SK-N-SH (cell line): ENCODE measurements at regions of chr17 and their contacts with region 1.

Region 1: DNA sequence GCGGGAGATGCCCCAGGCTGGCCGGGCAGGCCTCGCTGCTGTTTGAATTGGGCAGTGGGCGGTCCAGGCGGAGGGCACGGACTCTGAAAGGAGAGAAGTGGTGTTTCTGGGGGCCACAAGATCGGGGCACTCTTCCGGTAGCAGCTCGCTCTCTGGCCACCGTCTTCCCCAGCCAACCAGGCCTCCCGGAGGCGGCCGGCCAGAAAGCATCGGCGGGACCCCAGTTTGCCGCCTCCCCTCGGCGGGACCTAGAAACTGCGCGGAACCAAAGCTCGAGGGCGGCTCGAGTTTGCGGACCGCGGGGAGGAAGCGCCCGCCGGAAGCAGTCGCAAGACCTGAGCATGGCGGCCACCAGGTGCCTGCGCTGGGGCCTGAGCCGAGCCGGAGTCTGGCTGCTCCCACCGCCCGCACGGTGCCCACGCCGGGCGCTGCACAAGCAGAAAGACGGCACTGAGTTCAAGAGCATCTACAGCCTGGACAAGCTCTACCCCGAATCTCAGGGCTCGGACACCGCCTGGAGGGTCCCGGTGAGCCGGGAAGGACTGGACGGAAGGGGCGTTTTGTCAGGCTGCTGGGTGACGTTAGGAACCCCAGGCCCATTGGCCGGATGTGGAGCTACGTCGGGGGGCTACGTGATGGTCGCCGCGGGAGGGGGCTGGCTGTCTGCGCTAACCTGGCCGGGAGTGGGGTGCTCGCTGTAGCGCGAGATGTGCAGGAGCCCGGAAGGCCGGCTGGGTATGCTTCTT is at the start of gene MRPL58:
- DNase-seq: peak; percentile 96
- H3K4me3 ChIP-seq: peak within 1 kb of the TSS; percentile 65 to 77
- H3K27ac ChIP-seq: peak within 1 kb of the TSS; percentile 88 to 95
- H3K4me1 ChIP-seq: peaks cover 17 to 26% of the 10 kb centered on the region in 2 experiments; a peak in 3 of 4 replicates
- H3K27me3 ChIP-seq: no peaks in the 10 kb centered on the region
- CTCF ChIP-seq: peak; percentile 59
- EP300 ChIP-seq: peak; percentile 11 to 37; a peak in 2 of 4 replicates
- RAD21 ChIP-seq: peak; percentile 50
- polyA plus RNA-seq, gene MRPL58: 87.3 and 89.2 TPM in 2 replicates

Region 2: GRCh38 chr17:74972107-74972972 is 40.2 kb before region 1 on chr17 and contains the start of gene HID1:
- CTCF ChIA-PET with region 1: interaction called, 51 read pairs
- POLR2A ChIA-PET with region 1: interaction called, 97 read pairs
- DNase-seq: peak; percentile 96
- H3K4me3 ChIP-seq: peak within 1 kb of the TSS; percentile 54 to 70
- H3K27ac ChIP-seq: peak within 1 kb of the TSS in 1 of 2 experiments; percentile 85; a peak in 2 of 4 replicates
- H3K4me1 ChIP-seq: peaks cover 0 to 22% of the 10 kb centered on the region in 2 experiments; a peak in 1 of 4 replicates
- H3K27me3 ChIP-seq: peaks cover 26% of the 10 kb centered on the region
- CTCF ChIP-seq: no peak
- EP300 ChIP-seq: no peak
- RAD21 ChIP-seq: no peak
- polyA plus RNA-seq, gene HID1: 2.5 and 2.9 TPM in 2 replicates

Region 3: GRCh38 chr17:74981979-74982662 is 30.4 kb before region 1 on chr17:
- CTCF ChIA-PET with region 1: interaction called, 136 read pairs
- POLR2A ChIA-PET with region 1: interaction called, 197 read pairs
- DNase-seq: peak; percentile 99
- H3K4me3 ChIP-seq: peak overlapping the region; percentile 64 to 94
- H3K27ac ChIP-seq: peak overlapping the region; percentile 59 to 91
- H3K4me1 ChIP-seq: peaks cover 5 to 11% of the 10 kb centered on the region in 2 experiments; a peak in 2 of 4 replicates
- H3K27me3 ChIP-seq: no peaks in the 10 kb centered on the region
- CTCF ChIP-seq: peak; percentile 12; the same call in 1 of the 2 replicates
- EP300 ChIP-seq: 0 out of 4 replicates have a peak, but pooled peaks of 1 of the 2 experiments have one; percentile 4
- RAD21 ChIP-seq: no peak; the same call in 1 of the 2 replicates

Region 4: GRCh38 chr17:74987418-74987908 is 25.1 kb before region 1 on chr17 and contains the start of gene CDR2L:
- CTCF ChIA-PET with region 1: interaction called, 136 read pairs
- POLR2A ChIA-PET with region 1: interaction called, 197 read pairs
- DNase-seq: peak; percentile 98
- H3K4me3 ChIP-seq: peak within 1 kb of the TSS; percentile 80 to 93
- H3K27ac ChIP-seq: peak within 1 kb of the TSS; percentile 92
- H3K4me1 ChIP-seq: peaks cover 6 to 35% of the 10 kb centered on the region in 2 experiments; a peak in 2 of 4 replicates
- H3K27me3 ChIP-seq: no peaks in the 10 kb centered on the region
- CTCF ChIP-seq: no peak
- EP300 ChIP-seq: no peak; a peak in 1 of 4 replicates
- RAD21 ChIP-seq: no peak
- polyA plus RNA-seq, gene CDR2L: 18.6 and 21.2 TPM in 2 replicates

Region 5: GRCh38 chr17:75024686-75025397 is 12.3 kb after region 1 on chr17:
- CTCF ChIA-PET with region 1: interaction called, 18 read pairs
- POLR2A ChIA-PET with region 1: interaction called, 24 read pairs
- DNase-seq: no peak
- H3K4me3 ChIP-seq: no peak overlapping the region
- H3K27ac ChIP-seq: no peak overlapping the region
- H3K4me1 ChIP-seq: no peaks in the 10 kb centered on the region
- H3K27me3 ChIP-seq: no peaks in the 10 kb centered on the region
- CTCF ChIP-seq: no peak
- EP300 ChIP-seq: no peak
- RAD21 ChIP-seq: no peak

Region 6: GRCh38 chr17:75034236-75034908 is 21.9 kb after region 1 on chr17:
- CTCF ChIA-PET with region 1: interaction called, 31 read pairs
- POLR2A ChIA-PET with region 1: interaction called, 40 read pairs
- DNase-seq: peak; percentile 81
- H3K4me3 ChIP-seq: peak overlapping the region; percentile 67 to 98
- H3K27ac ChIP-seq: peak overlapping the region; percentile 90 to 92
- H3K4me1 ChIP-seq: peaks cover 0 to 22% of the 10 kb centered on the region in 2 experiments; a peak in 1 of 4 replicates
- H3K27me3 ChIP-seq: no peaks in the 10 kb centered on the region
- CTCF ChIP-seq: peak; percentile 49
- EP300 ChIP-seq: peak in 1 of 2 experiments; percentile 12; a peak in 1 of 4 replicates
- RAD21 ChIP-seq: no peak

Region 7: GRCh38 chr17:75124041-75124818 is 111.7 kb after region 1 on chr17:
- CTCF ChIA-PET with region 1: no interaction called
- POLR2A ChIA-PET with region 1: no interaction called
- DNase-seq: no peak
- H3K4me3 ChIP-seq: no peak overlapping the region
- H3K27ac ChIP-seq: no peak overlapping the region
- H3K4me1 ChIP-seq: peaks cover 4 to 7% of the 10 kb centered on the region in 2 experiments; a peak in 1 of 4 replicates
- H3K27me3 ChIP-seq: no peaks in the 10 kb centered on the region
- CTCF ChIP-seq: no peak
- EP300 ChIP-seq: peak in 1 of 2 experiments; percentile 35; a peak in 1 of 4 replicates
- RAD21 ChIP-seq: no peak

Region 8: DNA sequence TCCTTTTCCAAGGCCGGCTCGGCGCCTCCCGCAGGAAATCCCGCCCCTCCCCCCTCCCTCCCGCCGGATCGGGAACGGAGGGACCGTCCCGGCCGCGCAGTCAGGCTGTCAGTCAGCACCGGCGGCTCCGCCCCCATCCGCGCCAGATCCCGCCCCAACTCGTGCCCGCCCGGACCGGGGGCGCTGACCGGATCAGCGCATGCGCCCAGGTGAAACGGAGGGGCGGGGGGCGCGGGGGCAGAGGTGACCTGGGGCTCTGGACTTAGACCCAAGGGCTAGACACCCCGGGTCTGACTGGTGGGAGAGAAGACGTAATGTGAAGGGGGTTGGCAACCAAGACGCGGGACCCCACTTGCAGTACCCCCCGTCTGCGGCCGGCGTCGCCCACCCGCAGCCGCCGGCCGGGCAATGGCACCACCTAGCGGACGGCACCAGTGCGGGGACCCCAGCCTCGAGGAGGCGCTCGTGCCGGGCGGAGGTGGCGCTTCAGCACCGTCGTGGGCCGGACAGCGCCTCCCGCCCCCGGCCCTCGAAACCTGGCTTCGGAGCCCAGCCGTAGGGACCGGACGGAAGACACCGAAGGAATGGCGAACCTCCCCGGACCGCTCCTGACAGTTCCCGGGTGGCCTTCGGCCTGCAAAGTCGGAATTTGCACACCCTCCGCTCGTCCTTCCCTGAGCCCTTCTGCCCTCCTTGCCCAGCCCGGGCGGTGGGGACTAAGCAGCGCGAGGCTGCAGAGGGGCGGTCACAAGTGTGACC is 503.2 kb after region 1 on chr17 and contains the start of gene CASKIN2:
- CTCF ChIA-PET with region 1: no interaction called
- POLR2A ChIA-PET with region 1: no interaction called
- DNase-seq: peak; percentile 100
- H3K4me3 ChIP-seq: peak within 1 kb of the TSS; percentile 81 to 98
- H3K27ac ChIP-seq: peak within 1 kb of the TSS; percentile 45 to 88; a peak in 3 of 4 replicates
- H3K4me1 ChIP-seq: peaks cover 0 to 33% of the 10 kb centered on the region in 2 experiments; a peak in 1 of 4 replicates
- H3K27me3 ChIP-seq: no peaks in the 10 kb centered on the region
- CTCF ChIP-seq: peak; percentile 100
- EP300 ChIP-seq: no peak; a peak in 1 of 4 replicates
- RAD21 ChIP-seq: peak; percentile 71
- polyA plus RNA-seq, gene CASKIN2: 5.2 and 6.5 TPM in 2 replicates